ENCODE measurements at regions of chr13 and their contacts with region 1.

Region 1: GRCh38 chr13:23185542-23185941 is 4.8 kb downstream of the SGCG start:
- DNase-seq: no peak
- ATAC-seq: no peak
- H3K4me3 ChIP-seq: no peak overlapping the region
- H3K27ac ChIP-seq: no peak overlapping the region
- H3K4me1 ChIP-seq: no peaks in the 10 kb centered on the region
- H3K27me3 ChIP-seq: no peaks in the 10 kb centered on the region
- CTCF ChIP-seq: no peak
- EP300 ChIP-seq: no peak
- POLR2A ChIP-seq: no peak
- RAD21 ChIP-seq: no peak

Region 2: GRCh38 chr13:23129331-23129730 is 56.2 kb before region 1 on chr13:
- CTCF ChIA-PET with region 1: no interaction called
- POLR2A ChIA-PET with region 1: no interaction called
- RAD21 ChIA-PET with region 1: no interaction called
- SMC1A ChIA-PET with region 1: no interaction called
- in situ Hi-C with region 1: no loop called
- intact Hi-C with region 1: no loop called
- DNase-seq: no peak
- ATAC-seq: no peak
- H3K4me3 ChIP-seq: no peak overlapping the region
- H3K27ac ChIP-seq: no peak overlapping the region
- H3K4me1 ChIP-seq: no peaks in the 10 kb centered on the region
- H3K27me3 ChIP-seq: no peaks in the 10 kb centered on the region
- CTCF ChIP-seq: no peak
- EP300 ChIP-seq: no peak
- POLR2A ChIP-seq: no peak
- RAD21 ChIP-seq: no peak

Region 3: DNA sequence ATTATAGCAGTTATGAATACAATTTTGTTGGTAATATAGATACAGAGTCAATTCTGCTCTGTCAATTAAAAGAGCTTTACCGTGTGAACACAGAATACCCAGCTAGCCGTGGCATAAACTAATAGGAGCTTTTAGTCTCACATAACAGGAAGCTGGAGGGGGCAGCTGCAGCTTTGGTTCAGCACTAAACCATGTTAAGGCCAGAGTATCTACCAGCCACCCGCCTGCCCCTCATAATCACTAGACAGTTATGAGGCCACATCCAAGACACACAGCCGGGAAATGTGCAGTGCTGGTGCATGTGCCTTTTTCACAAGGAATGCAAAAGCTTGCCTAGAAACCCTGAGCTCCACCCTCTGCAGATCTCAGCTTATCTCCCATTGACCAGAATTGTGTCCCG is 57.5 kb after region 1 on chr13:
- CTCF ChIA-PET with region 1: no interaction called
- POLR2A ChIA-PET with region 1: no interaction called
- RAD21 ChIA-PET with region 1: no interaction called
- SMC1A ChIA-PET with region 1: no interaction called
- in situ Hi-C with region 1: loop called (anchors 5 kb)
- intact Hi-C with region 1: no loop called
- DNase-seq: no peak
- ATAC-seq: no peak
- H3K4me3 ChIP-seq: no peak overlapping the region
- H3K27ac ChIP-seq: no peak overlapping the region
- H3K4me1 ChIP-seq: no peaks in the 10 kb centered on the region
- H3K27me3 ChIP-seq: no peaks in the 10 kb centered on the region; a peak in 2 of 4 replicates
- CTCF ChIP-seq: no peak
- EP300 ChIP-seq: no peak
- POLR2A ChIP-seq: no peak
- RAD21 ChIP-seq: no peak

Measured in GM12878 (cell line).